Activated CD4-positive, alpha-beta T cell treated with anti-CD3 and anti-CD28 coated beads, Interleukin-2, amount 10 ng/mL, durations not matched to agents 7 days and 5 days (primary cell): ENCODE measurements at regions of chr18 and their contacts with region 1.

Region 1: DNA sequence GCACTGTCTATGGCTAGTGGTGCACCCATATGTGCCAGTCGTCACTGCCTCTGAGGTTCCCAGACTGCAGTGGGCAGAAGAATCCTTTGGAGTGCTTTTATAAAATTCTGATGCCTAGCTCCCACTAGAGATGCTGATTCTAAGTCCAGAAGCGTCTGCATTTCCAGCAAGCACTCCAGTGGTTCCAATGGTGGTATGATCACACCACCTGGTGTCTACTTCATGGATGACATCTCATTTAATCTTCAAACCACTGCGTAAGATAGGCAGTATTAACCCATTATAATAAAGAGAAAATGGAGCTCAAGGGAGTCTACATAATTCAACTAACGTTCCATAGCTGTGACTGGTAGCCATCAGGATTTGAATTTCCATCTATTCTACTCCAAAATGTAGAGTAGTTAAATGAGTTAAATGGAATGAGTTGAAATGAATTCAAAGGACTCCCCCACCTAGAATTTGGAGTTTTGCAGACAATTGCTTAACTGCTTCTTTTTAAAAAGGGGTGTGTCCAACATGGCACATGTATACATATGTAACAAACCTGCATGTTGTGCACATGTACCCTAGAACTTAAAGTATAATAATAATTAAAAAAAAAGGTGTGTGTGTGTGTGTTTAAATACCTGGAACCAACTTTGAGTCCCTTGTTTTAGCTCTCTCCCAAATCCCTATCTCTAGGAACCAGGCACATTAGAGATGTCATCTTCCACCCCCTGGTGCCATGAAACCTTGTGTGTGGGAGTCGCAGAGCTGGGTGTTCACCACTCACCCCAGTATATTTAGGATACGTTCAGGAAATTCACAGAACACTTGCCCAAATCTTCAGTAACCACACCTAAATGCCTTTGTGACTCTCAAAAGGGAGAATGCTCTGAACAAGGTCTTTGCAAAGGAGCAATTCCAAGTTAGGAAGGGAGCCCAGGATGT is 14.1 kb downstream of the LAMA3 start:
- DNase-seq: peak; percentile 56
- H3K4me3 Mint-ChIP-seq: no peak overlapping the region
- H3K27ac Mint-ChIP-seq: no peak overlapping the region
- H3K4me1 Mint-ChIP-seq: peaks cover 2% of the 10 kb centered on the region
- H3K27me3 Mint-ChIP-seq: peaks cover 36% of the 10 kb centered on the region

Region 2: GRCh38 chr18:23619388-23619881 is 83.9 kb before region 1 on chr18:
- CTCF ChIA-PET with region 1: interaction called, 11 read pairs
- POLR2A ChIA-PET with region 1: no interaction called
- DNase-seq: no peak
- H3K4me3 Mint-ChIP-seq: peak overlapping the region; percentile 25
- H3K27ac Mint-ChIP-seq: no peak overlapping the region
- H3K4me1 Mint-ChIP-seq: peaks cover 6% of the 10 kb centered on the region
- H3K27me3 Mint-ChIP-seq: peaks cover 48% of the 10 kb centered on the region

Region 3: GRCh38 chr18:23629444-23629946 is 73.8 kb before region 1 on chr18:
- CTCF ChIA-PET with region 1: no interaction called
- POLR2A ChIA-PET with region 1: no interaction called
- DNase-seq: no peak
- H3K4me3 Mint-ChIP-seq: no peak overlapping the region
- H3K27ac Mint-ChIP-seq: no peak overlapping the region
- H3K4me1 Mint-ChIP-seq: peaks cover 12% of the 10 kb centered on the region
- H3K27me3 Mint-ChIP-seq: peaks cover 9% of the 10 kb centered on the region